PC-9 (cell line): ENCODE measurements at regions of chr2 and their contacts with region 1.

Region 1: GRCh38 chr2:237154082-237154638 is 68.5 kb downstream of the COPS8 start:
- DNase-seq: peak; percentile 52 to 69
- H3K4me3 ChIP-seq: no peak overlapping the region
- H3K27ac ChIP-seq: no peak overlapping the region
- H3K4me1 ChIP-seq: no peaks in the 10 kb centered on the region
- H3K27me3 ChIP-seq: no peaks in the 10 kb centered on the region
- CTCF ChIP-seq: peak; percentile 90

Region 2: GRCh38 chr2:237315170-237315828 is 161.1 kb after region 1 on chr2:
- CTCF ChIA-PET with region 1: no interaction called
- POLR2A ChIA-PET with region 1: no interaction called
- intact Hi-C with region 1: no loop called
- DNase-seq: no peak
- H3K4me3 ChIP-seq: no peak overlapping the region
- H3K27ac ChIP-seq: no peak overlapping the region
- H3K4me1 ChIP-seq: no peaks in the 10 kb centered on the region
- H3K27me3 ChIP-seq: 0 out of 2 replicates have a peak, but pooled peaks cover 4% of the 10 kb centered on the region
- CTCF ChIP-seq: no peak

Region 3: DNA sequence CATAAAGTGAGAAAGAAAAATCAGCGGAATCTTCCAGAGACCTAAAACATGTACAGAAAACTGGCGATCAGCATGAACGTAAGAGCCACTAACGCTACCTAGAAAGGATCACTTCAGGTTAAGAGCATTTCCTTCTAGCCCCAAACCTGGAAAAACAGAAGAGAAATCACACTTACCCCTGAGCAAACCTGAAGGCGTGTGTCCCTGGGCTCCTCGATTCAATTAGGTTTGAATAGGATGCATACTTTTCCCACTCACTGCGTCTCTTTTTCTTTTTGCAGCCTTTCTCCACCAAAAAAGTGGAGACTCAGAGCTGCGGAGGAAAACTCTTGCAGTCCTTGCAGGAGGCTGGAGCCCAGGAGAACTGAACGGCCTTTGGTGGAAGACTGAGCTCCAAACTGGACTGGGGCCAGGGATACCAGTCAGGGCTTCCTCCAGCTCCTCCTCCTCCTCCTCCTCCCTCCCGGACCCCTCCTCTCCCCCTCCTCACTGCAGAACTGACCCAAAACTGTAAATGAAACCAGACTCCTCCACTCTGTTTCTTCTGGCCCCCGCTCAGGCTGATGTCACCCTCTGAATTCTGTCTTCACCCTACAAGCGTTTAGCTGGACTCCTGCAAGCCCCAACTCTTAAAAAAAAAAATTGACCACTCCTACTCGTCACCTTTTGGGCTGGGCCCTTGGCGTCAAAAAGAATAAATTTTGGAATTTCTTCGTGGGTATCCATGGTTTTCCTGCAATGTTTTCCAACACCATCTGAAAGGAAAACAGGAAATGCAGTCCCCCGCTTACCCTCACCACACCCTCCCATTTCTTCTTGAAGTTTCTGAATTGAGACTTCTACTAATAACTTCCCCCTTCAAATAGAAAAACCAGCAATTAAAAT is 259.9 kb after region 1 on chr2 and contains the start of gene COL6A3:
- CTCF ChIA-PET with region 1: interaction called, 4 read pairs
- POLR2A ChIA-PET with region 1: no interaction called
- intact Hi-C with region 1: loop called (anchors 5 kb)
- DNase-seq: no peak
- H3K4me3 ChIP-seq: no peak within 1 kb of the TSS
- H3K27ac ChIP-seq: no peak within 1 kb of the TSS
- H3K4me1 ChIP-seq: no peaks in the 10 kb centered on the region
- H3K27me3 ChIP-seq: no peaks in the 10 kb centered on the region
- CTCF ChIP-seq: no peak
- total RNA-seq, gene COL6A3: 0.57 and 0.75 TPM in 2 replicates

Region 4: GRCh38 chr2:237774802-237775553 is 620.8 kb after region 1 on chr2:
- CTCF ChIA-PET with region 1: no interaction called
- POLR2A ChIA-PET with region 1: no interaction called
- intact Hi-C with region 1: loop called (anchors 10 kb)
- DNase-seq: peak; percentile 59 to 63
- H3K4me3 ChIP-seq: no peak overlapping the region
- H3K27ac ChIP-seq: no peak overlapping the region
- H3K4me1 ChIP-seq: no peaks in the 10 kb centered on the region
- H3K27me3 ChIP-seq: no peaks in the 10 kb centered on the region
- CTCF ChIP-seq: peak; percentile 89